ENCODE measurements at regions of chr6 and their contacts with region 1.

Region 1: DNA sequence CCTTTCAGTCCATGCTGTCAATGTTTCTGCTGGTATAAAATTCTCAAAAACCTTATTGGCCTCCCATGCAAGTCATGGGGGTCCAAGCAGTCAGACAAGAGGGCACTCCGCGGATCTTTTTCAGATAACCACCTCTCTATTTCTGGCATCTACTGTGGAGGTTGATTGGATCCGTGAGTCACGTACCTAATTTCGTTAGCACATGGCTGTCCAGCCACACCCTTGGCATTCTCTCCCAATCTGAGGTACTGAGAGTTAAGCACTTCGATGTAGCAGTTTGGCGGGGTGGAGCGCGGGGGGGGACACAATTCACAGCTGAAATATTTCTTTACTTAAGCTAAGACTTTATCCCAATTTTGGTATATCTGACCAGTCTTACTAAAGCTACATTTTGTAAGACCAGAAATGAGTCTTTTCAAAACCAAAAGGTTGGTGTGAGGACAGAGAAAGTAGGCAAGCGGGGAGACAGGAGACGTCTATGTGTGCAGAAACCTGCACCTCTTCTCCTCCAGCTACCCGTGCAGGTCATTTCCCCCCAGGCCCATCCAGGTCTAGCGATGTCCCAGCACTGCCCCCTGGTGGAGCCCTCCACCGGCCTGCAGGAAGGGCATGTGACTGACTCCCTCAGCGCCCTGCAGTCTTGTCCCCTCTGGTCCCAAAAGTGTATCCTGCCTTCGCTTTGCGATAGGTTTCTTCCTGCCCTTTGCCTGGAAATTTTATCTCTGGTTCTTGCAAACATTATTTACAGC is 113.1 kb downstream of the ADAT2 start:
- DNase-seq: peak; percentile 70 to 98
- H3K4me3 ChIP-seq: no peak overlapping the region
- H3K27ac ChIP-seq: no peak overlapping the region
- H3K4me1 ChIP-seq: no peaks in the 10 kb centered on the region; a peak in 1 of 7 replicates
- H3K27me3 ChIP-seq: no peaks in the 10 kb centered on the region
- CTCF ChIP-seq: peak; percentile 92 to 99 (median 98)
- EP300 ChIP-seq: no peak
- POLR2A ChIP-seq: no peak
- RAD21 ChIP-seq: peak; percentile 90 to 91

Region 2: GRCh38 chr6:143026696-143027449 is 310.5 kb before region 1 on chr6:
- CTCF ChIA-PET with region 1: interaction called, 13 read pairs
- POLR2A ChIA-PET with region 1: no interaction called
- DNase-seq: peak; percentile 27 to 71
- H3K4me3 ChIP-seq: no peak overlapping the region
- H3K27ac ChIP-seq: no peak overlapping the region
- H3K4me1 ChIP-seq: no peaks in the 10 kb centered on the region
- H3K27me3 ChIP-seq: no peaks in the 10 kb centered on the region
- CTCF ChIP-seq: peak; percentile 74 to 85 (median 82)
- EP300 ChIP-seq: no peak
- POLR2A ChIP-seq: no peak
- RAD21 ChIP-seq: peak; percentile 88 to 91

Region 3: GRCh38 chr6:143098054-143098671 is 239.2 kb before region 1 on chr6:
- CTCF ChIA-PET with region 1: no interaction called
- POLR2A ChIA-PET with region 1: no interaction called
- DNase-seq: no peak
- H3K4me3 ChIP-seq: no peak overlapping the region
- H3K27ac ChIP-seq: no peak overlapping the region
- H3K4me1 ChIP-seq: 0 out of 7 replicates have a peak, but pooled peaks cover 0 to 2% (median 0%) of the 10 kb centered on the region in 4 experiments
- H3K27me3 ChIP-seq: no peaks in the 10 kb centered on the region
- CTCF ChIP-seq: no peak
- EP300 ChIP-seq: no peak
- POLR2A ChIP-seq: no peak
- RAD21 ChIP-seq: no peak

Region 4: DNA sequence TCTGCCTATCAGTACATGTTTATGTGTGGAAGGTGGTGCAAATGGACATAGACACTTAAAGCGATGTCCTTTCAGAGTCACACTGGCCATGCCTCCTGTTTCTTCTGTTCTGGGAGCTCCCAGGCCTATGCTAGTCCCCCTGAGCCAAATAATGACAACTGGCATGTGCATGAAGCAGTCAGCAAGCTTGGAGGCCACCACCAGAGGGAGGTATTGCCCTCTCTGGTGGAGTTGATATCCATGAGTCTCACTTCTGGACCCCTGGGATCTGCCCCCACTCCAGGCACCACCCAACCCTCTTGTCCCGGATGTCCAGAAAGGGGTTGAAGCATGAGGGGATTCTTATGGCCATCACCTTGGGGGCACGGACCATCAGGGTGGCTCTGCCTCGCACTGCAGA is 104.5 kb before region 1 on chr6:
- CTCF ChIA-PET with region 1: interaction called, 80 read pairs
- POLR2A ChIA-PET with region 1: no interaction called
- DNase-seq: peak in 1 of 2 experiments; percentile 68
- H3K4me3 ChIP-seq: no peak overlapping the region
- H3K27ac ChIP-seq: no peak overlapping the region
- H3K4me1 ChIP-seq: peaks cover 0 to 2% (median under 1%) of the 10 kb centered on the region in 4 experiments; a peak in 2 of 7 replicates
- H3K27me3 ChIP-seq: no peaks in the 10 kb centered on the region
- CTCF ChIP-seq: peak; percentile 75 to 86 (median 82)
- EP300 ChIP-seq: no peak
- POLR2A ChIP-seq: no peak
- RAD21 ChIP-seq: peak; percentile 74 to 85

Region 5: GRCh38 chr6:143290206-143290605 is 47.2 kb before region 1 on chr6:
- CTCF ChIA-PET with region 1: interaction called, 10 read pairs
- POLR2A ChIA-PET with region 1: no interaction called
- DNase-seq: no peak
- H3K4me3 ChIP-seq: no peak overlapping the region
- H3K27ac ChIP-seq: no peak overlapping the region
- H3K4me1 ChIP-seq: peaks cover 0 to 10% (median 4%) of the 10 kb centered on the region in 4 experiments; a peak in 5 of 7 replicates
- H3K27me3 ChIP-seq: no peaks in the 10 kb centered on the region
- CTCF ChIP-seq: no peak
- EP300 ChIP-seq: no peak
- POLR2A ChIP-seq: no peak
- RAD21 ChIP-seq: no peak

Region 6: GRCh38 chr6:143348531-143348930 is 11.2 kb after region 1 on chr6:
- CTCF ChIA-PET with region 1: interaction called, 39 read pairs
- POLR2A ChIA-PET with region 1: no interaction called
- DNase-seq: no peak
- H3K4me3 ChIP-seq: no peak overlapping the region
- H3K27ac ChIP-seq: no peak overlapping the region
- H3K4me1 ChIP-seq: no peaks in the 10 kb centered on the region
- H3K27me3 ChIP-seq: no peaks in the 10 kb centered on the region
- CTCF ChIP-seq: no peak
- EP300 ChIP-seq: no peak
- POLR2A ChIP-seq: no peak
- RAD21 ChIP-seq: no peak

Region 7: DNA sequence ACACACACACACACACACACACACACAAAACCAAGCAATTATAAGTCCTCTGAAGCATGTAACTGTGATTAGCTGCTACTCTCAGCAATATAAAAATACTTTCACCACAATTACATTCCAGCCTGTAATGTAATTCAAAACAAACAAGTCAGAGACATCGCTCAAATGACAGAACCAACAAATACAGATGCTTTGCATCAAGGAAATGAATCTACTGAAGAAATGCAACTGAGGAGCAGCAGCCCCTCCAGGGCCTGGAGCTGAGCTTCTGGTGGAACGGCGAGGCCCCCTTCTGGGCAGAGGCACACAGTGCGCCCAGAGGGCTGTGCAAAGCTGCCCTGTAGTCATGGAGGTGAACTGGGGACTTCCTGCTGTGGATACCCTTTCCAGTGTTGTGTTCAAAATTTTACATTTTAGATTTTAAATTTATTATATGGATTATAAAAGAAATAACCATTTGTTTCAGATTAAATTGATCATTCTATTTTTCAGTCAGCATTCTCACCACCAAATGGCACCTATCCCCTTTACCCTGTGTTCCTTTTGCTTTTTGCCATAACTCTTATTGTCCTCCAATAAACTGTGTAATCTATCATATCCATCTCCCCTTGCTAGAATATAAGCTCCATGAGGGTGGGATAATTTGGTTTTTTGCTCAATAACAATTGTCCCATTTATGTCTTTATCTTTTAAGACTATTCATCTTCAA is 89.9 kb after region 1 on chr6:
- CTCF ChIA-PET with region 1: interaction called, 41 read pairs
- POLR2A ChIA-PET with region 1: no interaction called
- DNase-seq: peak; percentile 49 to 79
- H3K4me3 ChIP-seq: no peak overlapping the region
- H3K27ac ChIP-seq: no peak overlapping the region
- H3K4me1 ChIP-seq: no peaks in the 10 kb centered on the region
- H3K27me3 ChIP-seq: no peaks in the 10 kb centered on the region
- CTCF ChIP-seq: peak; percentile 90 to 100 (median 95)
- EP300 ChIP-seq: no peak
- POLR2A ChIP-seq: no peak
- RAD21 ChIP-seq: peak; percentile 98 to 99

Region 8: DNA sequence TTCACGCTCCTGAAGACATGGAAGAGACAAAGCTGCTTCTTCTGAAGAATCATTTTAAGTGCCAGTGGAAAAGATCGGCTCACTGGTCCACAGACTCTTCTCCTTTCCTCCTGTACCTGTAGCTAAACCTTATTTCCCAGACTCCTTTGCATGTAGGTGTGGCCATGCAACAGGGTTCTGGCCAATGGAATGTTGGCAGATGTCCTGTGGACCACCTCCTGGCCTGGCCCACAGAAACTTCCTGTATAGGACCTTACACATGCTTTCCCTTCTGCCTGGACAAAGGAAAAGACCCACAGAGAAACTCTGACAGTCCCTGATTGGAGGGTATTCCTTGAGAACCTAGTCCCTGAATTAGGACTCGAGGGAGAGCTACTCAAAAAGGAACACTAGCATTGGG is 1630.4 kb after region 1 on chr6:
- CTCF ChIA-PET with region 1: no interaction called
- POLR2A ChIA-PET with region 1: no interaction called
- DNase-seq: no peak
- H3K4me3 ChIP-seq: no peak overlapping the region
- H3K27ac ChIP-seq: no peak overlapping the region
- H3K4me1 ChIP-seq: no peaks in the 10 kb centered on the region
- H3K27me3 ChIP-seq: no peaks in the 10 kb centered on the region
- CTCF ChIP-seq: no peak
- EP300 ChIP-seq: no peak
- POLR2A ChIP-seq: no peak
- RAD21 ChIP-seq: no peak